ENCODE measurements at regions of chr3 and their contacts with region 1.

Region 1: DNA sequence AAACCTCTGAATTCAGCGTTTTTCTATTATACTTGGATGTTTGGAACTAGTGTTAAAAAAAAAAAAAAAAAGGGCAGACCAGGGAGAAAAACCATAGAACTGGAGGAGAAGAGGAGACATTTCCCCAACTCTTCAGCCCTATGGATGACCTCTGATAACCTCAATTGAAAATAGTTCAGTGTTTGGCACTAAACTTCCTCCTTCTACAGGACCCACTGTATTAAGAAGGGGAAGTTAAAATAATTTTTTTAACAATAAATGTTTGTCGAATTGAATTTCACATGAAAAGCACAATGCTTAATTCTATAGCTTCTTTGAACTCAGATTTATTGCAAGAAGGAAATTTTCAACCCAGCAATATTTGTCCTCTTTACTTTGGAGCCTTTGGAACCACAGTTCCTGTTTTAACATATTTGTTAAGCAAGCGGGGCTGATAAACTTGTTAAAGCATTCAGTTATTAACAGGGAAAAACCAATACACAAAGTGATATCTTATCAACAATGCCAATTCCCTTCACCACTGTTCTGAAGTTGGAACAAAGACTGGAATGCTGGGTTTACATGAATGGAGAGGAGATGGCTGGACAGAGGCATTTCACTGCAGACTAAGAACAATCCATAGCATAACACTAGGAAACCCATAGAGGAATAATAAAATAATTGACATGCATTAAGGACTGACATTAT is 3.1 kb upstream of the A4GNT start:
- DNase-seq: peak in 2 of 3 donors; percentile 53 to 75
- H3K4me3 ChIP-seq: peak overlapping the region in 1 of 3 experiments; percentile 65
- H3K4me3 Mint-ChIP-seq: peak overlapping the region; percentile 9 to 60
- H3K27ac ChIP-seq: peak overlapping the region in 1 of 2 donors; percentile 80
- H3K27ac Mint-ChIP-seq: peak overlapping the region; percentile 84 to 96 (median 94)
- H3K4me1 ChIP-seq: peaks cover 70 to 71% of the 10 kb centered on the region in 2 donors
- H3K4me1 Mint-ChIP-seq: peaks cover 68% of the 10 kb centered on the region
- H3K27me3 ChIP-seq: no peaks in the 10 kb centered on the region
- H3K27me3 Mint-ChIP-seq: peaks cover 0 to 3% (median 2%) of the 10 kb centered on the region in 3 donors
- CTCF ChIP-seq: no peak

Region 2: DNA sequence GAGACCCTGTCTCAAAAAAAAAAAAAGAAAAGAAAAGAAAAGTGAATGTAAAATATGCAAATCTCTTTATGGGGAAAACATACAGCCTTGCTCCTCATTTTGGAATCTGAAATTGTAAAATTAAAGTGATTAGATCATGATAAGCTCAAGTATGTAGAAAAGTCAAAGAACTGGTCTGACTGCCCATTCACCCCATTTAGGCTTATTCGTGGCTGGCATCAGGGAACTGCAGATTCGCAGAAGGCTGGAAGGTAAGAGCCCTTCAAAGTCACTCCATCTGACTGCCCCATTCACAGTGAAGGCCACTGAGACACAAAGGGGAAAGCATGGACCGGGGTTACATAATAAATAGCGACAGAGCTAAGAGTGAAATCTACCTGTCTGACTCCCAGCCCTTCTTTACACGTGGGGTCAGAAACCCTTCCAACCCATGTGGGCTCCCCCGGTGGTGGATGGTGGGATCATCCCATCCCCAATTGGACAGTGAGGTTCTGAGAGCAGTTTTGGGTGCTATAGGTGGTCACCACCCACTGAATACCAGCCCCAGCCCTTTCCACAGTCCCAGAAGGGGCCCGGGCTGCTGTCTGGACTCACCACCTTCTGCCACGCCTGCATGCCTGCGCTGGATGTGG is 38.0 kb before region 1 on chr3:
- intact Hi-C with region 1: no loop called
- DNase-seq: no peak
- H3K4me3 ChIP-seq: no peak overlapping the region
- H3K4me3 Mint-ChIP-seq: no peak overlapping the region
- H3K27ac ChIP-seq: no peak overlapping the region
- H3K27ac Mint-ChIP-seq: no peak overlapping the region
- H3K4me1 ChIP-seq: no peaks in the 10 kb centered on the region
- H3K4me1 Mint-ChIP-seq: no peaks in the 10 kb centered on the region
- H3K27me3 ChIP-seq: no peaks in the 10 kb centered on the region
- H3K27me3 Mint-ChIP-seq: peaks cover 0 to 2% (median 0%) of the 10 kb centered on the region in 3 donors
- CTCF ChIP-seq: peak; percentile 51

Region 3: GRCh38 chr3:138186803-138187295 is 51.6 kb after region 1 on chr3:
- intact Hi-C with region 1: loop called in 1 of 2 experiments (anchors 5 kb)
- DNase-seq: peak; percentile 79 to 83 (median 82)
- H3K4me3 ChIP-seq: peak overlapping the region; percentile 64 to 97 (median 95)
- H3K4me3 Mint-ChIP-seq: peak overlapping the region; percentile 92 to 96
- H3K27ac ChIP-seq: peak overlapping the region; percentile 81 to 95
- H3K27ac Mint-ChIP-seq: peak overlapping the region; percentile 90 to 99 (median 98)
- H3K4me1 ChIP-seq: peaks cover 13 to 28% of the 10 kb centered on the region in 2 donors
- H3K4me1 Mint-ChIP-seq: peaks cover 30% of the 10 kb centered on the region
- H3K27me3 ChIP-seq: peaks cover 0 to 2% of the 10 kb centered on the region in 2 donors
- H3K27me3 Mint-ChIP-seq: peaks cover 3 to 10% (median 4%) of the 10 kb centered on the region in 3 donors
- CTCF ChIP-seq: no peak

Region 4: GRCh38 chr3:138227650-138228049 is 92.4 kb after region 1 on chr3:
- intact Hi-C with region 1: loop called in 1 of 2 experiments (anchors 10 kb)
- DNase-seq: no peak
- H3K4me3 ChIP-seq: no peak overlapping the region
- H3K4me3 Mint-ChIP-seq: no peak overlapping the region
- H3K27ac ChIP-seq: peak overlapping the region in 1 of 2 donors; percentile 33
- H3K27ac Mint-ChIP-seq: peak overlapping the region in 3 of 7 donors; percentile 10 to 66 (median 14)
- H3K4me1 ChIP-seq: peaks cover 9 to 10% of the 10 kb centered on the region in 2 donors
- H3K4me1 Mint-ChIP-seq: peaks cover 10% of the 10 kb centered on the region
- H3K27me3 ChIP-seq: no peaks in the 10 kb centered on the region
- H3K27me3 Mint-ChIP-seq: no peaks in the 10 kb centered on the region
- CTCF ChIP-seq: no peak

Measured in CD14-positive monocyte (primary cell).